AG04449 (cell line): ENCODE measurements at regions of chr13 and their contacts with region 1.

Region 1: DNA sequence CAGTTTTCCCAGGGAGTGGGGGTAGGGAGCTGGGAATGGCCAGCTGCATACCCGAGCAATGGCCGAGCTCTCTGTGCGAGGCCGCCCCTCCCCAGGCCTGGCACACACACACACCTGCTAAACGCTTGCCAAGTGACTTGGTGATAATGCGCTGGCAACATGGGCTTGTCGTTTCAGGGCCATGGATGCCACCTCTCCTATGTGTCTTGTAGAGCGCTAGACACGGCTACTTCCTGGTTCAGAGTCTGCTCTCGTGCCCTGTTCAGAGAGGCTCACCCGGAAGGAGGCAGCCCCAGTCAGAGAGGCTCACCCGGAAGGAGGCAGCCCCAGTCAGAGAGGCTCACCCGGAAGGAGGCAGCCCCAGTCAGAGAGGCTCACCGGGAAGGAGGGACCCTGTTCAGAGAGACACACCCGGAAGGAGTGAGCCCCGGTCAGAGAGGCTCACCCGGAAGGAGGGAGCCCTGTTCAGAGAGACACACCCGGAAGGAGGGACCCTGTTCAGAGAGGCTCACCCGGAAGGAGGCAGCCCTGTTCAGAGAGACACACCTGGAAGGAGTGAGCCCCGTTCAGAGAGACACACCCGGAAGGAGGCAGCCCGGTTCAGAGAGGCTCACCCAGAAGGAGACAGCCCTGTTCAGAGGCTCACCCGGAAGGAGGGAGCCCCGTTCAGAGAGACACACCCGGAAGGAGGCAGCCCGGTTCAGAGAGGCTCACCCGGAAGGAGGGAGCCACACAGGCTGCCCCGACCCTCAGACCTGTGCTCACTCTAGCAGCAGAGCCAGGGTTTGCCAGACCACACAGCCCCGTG is 4.2 kb downstream of the ADPRHL1 start:
- DNase-seq: no peak
- H3K4me3 ChIP-seq: no peak overlapping the region
- CTCF ChIP-seq: no peak

Region 2: GRCh38 chr13:113275387-113275786 is 173.7 kb before region 1 on chr13:
- CTCF ChIA-PET with region 1: interaction called, 18 read pairs
- POLR2A ChIA-PET with region 1: no interaction called
- DNase-seq: no peak
- H3K4me3 ChIP-seq: no peak overlapping the region
- CTCF ChIP-seq: peak; percentile 46

Region 3: DNA sequence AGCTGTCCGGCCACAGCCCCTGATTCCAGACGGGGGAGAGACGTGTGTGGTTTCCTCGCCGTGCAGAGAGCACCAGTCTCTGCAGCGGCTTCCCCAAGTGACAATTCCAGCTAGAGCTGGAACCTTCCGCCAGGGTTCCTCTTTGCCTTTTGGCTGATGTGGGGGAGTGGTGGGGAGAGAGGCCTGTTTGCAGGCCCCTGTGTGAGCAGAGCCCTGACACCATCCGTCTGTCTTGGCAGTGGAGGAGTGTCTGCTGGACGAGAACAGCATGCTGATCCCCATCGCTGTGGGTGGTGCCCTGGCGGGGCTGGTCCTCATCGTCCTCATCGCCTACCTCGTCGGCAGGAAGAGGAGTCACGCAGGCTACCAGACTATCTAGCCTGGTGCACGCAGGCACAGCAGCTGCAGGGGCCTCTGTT is 127.0 kb before region 1 on chr13:
- CTCF ChIA-PET with region 1: no interaction called
- POLR2A ChIA-PET with region 1: no interaction called
- DNase-seq: no peak
- H3K4me3 ChIP-seq: no peak overlapping the region
- CTCF ChIP-seq: no peak

Region 4: DNA sequence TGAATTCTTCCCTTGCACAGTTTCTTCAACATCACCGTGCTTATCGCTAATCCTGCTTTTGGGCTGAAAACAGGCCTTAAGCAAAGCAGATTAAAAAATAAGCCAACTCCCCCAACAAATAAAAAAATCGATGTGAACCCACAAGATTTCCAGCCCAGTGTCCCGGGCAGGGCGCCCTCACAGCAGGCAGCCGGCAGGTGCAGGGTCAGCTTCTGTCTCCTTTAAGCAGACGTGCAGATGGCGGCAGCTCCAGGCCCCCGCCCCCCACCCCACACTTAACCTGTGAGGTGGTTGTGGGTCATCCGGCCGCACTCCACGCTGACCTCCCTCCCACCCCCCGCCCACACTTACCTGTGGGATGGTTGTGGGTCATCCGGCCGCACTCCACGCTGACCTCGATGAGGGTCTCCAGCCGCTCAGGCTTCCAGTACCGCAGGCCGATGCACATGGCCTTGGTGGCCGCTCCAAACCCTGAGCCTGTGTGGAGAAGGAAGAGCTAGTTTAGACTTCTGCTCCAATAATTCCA is 15.6 kb before region 1 on chr13:
- CTCF ChIA-PET with region 1: no interaction called
- POLR2A ChIA-PET with region 1: no interaction called
- DNase-seq: no peak
- H3K4me3 ChIP-seq: no peak overlapping the region
- CTCF ChIP-seq: no peak

Region 5: GRCh38 chr13:113465300-113465699 is 16.2 kb after region 1 on chr13:
- CTCF ChIA-PET with region 1: interaction called, 14 read pairs
- POLR2A ChIA-PET with region 1: no interaction called
- DNase-seq: no peak
- H3K4me3 ChIP-seq: no peak overlapping the region
- CTCF ChIP-seq: no peak